ENCODE measurements at regions of chr2 and their contacts with region 1.

Region 1: GRCh38 chr2:98455494-98455976 is 10.9 kb downstream of the INPP4A start:
- DNase-seq: peak; percentile 41
- CTCF ChIP-seq: no peak

Region 2: DNA sequence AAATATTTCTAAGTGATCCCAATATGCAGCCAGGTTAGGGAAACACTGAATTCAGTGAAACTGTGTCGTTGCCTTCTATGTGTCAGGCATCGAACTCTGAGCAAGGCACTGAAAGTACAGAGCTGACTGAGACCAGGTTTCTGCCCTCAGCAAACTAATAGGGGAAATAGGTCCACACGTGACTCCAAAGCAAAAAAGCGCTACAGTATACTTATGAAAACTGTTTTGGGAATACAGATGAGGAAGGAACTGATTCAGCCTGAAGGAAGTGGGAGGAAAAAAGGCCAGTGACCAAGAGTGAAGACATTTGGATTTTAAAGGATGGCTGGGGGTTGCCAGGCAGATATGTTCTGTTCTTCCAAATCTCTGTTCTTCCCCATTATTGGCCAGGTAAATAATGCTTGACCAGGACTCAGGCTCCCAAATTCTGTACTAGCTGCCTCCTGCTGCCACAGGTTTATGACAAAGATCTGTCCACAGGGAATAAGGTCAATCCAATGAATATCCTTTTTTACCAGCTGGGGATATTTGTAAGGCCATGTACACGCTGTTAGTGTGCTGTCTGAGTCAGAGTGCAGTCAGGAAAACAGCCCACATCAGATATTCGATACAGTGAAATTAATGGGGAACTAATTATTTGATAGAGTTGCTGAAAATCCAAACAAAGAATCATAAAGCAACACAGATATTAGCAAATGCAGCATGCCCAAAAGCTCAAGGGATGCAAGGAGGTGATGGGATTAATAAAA is 35.4 kb before region 1 on chr2:
- CTCF ChIA-PET with region 1: no interaction called
- POLR2A ChIA-PET with region 1: no interaction called
- DNase-seq: no peak
- CTCF ChIP-seq: no peak

Region 3: GRCh38 chr2:98433363-98433964 is 22.1 kb before region 1 on chr2:
- CTCF ChIA-PET with region 1: no interaction called
- POLR2A ChIA-PET with region 1: no interaction called
- DNase-seq: no peak
- CTCF ChIP-seq: no peak

Region 4: GRCh38 chr2:98473995-98474780 is 18.7 kb after region 1 on chr2:
- CTCF ChIA-PET with region 1: interaction called, 26 read pairs
- POLR2A ChIA-PET with region 1: interaction called, 5 read pairs
- DNase-seq: peak; percentile 52
- CTCF ChIP-seq: no peak

Measured in GM10248 (cell line).